CD8-positive, alpha-beta T cell (primary cell): ENCODE measurements at regions of chr17 and their contacts with region 1.

Region 1: DNA sequence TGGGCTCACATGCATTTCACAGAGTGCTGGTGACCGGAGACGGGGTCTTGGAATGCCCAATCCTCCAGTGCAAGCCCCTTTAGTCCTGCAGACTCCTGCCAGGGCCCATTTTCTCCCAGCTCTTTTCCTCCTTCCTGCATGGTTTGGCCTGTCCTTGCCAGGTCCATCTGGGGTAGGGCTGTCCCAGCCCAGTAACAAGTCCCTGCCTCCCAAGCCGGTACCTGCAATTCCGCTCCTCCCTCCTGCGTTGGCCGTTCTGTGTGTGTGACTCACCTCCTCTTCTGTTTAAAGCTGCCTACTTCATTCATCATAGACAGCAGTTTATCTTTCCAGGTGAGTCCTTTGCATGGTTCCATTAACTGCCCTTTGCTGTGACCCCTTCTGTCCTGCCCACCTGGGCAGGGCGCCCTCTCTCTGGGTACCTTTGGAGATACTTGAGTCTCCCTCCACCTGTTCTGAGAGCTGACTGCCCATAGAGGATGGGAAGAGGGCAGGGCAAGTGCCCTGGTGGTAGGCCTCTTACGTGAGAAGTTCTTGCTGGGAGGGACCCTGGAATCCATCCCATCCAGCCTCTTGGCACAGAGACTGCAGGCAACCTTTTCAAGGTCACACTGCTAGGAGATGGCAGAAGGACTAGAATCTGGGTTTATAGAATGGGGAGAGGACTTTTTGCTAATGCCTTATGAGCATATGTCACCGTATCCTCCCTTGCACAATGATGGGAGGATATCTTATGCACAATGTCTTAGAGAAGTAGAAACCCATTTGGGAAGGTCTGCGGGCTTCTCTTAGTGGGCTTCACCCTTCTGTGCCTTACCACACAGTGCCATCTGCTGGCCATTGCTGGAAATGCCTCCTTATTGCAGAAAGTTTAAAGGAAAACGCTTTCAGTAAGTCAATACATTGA is 29.7 kb upstream of the LGALS9 start:
- DNase-seq: peak; percentile 67 to 89 (median 81)
- ATAC-seq: peak; percentile 70
- H3K4me3 ChIP-seq: no peak overlapping the region
- H3K4me3 Mint-ChIP-seq: no peak overlapping the region
- H3K27ac ChIP-seq: no peak overlapping the region
- H3K27ac Mint-ChIP-seq: no peak overlapping the region
- H3K4me1 ChIP-seq: no peaks in the 10 kb centered on the region
- H3K4me1 Mint-ChIP-seq: peaks cover 7% of the 10 kb centered on the region
- H3K27me3 ChIP-seq: no peaks in the 10 kb centered on the region
- H3K27me3 Mint-ChIP-seq: no peaks in the 10 kb centered on the region
- CTCF ChIP-seq: peak; percentile 90

Region 2: GRCh38 chr17:27245230-27245696 is 356.1 kb before region 1 on chr17:
- CTCF ChIA-PET with region 1: interaction called, 222 read pairs
- POLR2A ChIA-PET with region 1: no interaction called
- intact Hi-C with region 1: no loop called
- DNase-seq: peak; percentile 6 to 64 (median 47)
- ATAC-seq: peak; percentile 73
- H3K4me3 ChIP-seq: no peak overlapping the region
- H3K4me3 Mint-ChIP-seq: no peak overlapping the region
- H3K27ac ChIP-seq: no peak overlapping the region
- H3K27ac Mint-ChIP-seq: no peak overlapping the region
- H3K4me1 ChIP-seq: no peaks in the 10 kb centered on the region
- H3K4me1 Mint-ChIP-seq: no peaks in the 10 kb centered on the region
- H3K27me3 ChIP-seq: no peaks in the 10 kb centered on the region
- H3K27me3 Mint-ChIP-seq: peaks cover 11% of the 10 kb centered on the region
- CTCF ChIP-seq: no peak

Region 3: DNA sequence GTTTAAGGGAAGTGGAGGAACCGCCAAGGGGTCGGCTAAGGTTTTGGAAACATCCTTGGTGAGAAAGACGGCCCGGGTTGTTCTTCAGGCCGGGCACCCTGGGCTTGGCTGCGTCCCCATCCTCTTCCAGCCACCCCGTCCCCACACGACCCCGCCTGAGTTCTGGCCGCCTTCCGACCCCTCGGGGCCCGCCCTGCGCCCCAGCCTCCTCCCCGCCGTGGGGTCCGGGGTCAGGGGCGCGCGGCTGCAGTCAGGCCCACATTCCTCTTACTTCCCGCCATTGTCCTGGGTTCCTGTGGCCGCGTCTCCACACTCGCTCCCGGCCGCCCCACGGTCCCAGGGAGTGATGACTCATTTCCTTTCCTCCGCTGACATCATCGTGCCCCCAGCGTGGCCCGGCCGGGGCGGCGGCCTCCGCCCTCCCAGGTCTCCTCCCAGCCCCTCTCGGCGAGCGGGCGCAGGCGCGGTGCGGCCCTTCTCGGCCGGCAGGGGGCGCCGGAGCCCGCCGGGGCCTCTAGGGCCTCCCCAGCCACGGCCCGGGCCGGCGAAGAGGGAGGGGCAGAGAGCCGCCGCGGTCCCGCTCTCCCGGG is 247.8 kb before region 1 on chr17:
- CTCF ChIA-PET with region 1: interaction called, 43 read pairs
- POLR2A ChIA-PET with region 1: no interaction called
- intact Hi-C with region 1: loop called (anchors 1 kb)
- DNase-seq: peak; percentile 67 to 94 (median 86)
- ATAC-seq: peak; percentile 95
- H3K4me3 ChIP-seq: peak overlapping the region; percentile 66 to 78
- H3K4me3 Mint-ChIP-seq: peak overlapping the region; percentile 77
- H3K27ac ChIP-seq: peak overlapping the region; percentile 68 to 84
- H3K27ac Mint-ChIP-seq: peak overlapping the region; percentile 93
- H3K4me1 ChIP-seq: peaks cover 18% of the 10 kb centered on the region
- H3K4me1 Mint-ChIP-seq: peaks cover 17% of the 10 kb centered on the region
- H3K27me3 ChIP-seq: no peaks in the 10 kb centered on the region
- H3K27me3 Mint-ChIP-seq: no peaks in the 10 kb centered on the region
- CTCF ChIP-seq: peak; percentile 91

Region 4: GRCh38 chr17:27455914-27456680 is 145.2 kb before region 1 on chr17 and contains the start of gene KSR1:
- CTCF ChIA-PET with region 1: interaction called, 9 read pairs
- POLR2A ChIA-PET with region 1: no interaction called
- intact Hi-C with region 1: loop called (anchors 1 kb)
- DNase-seq: peak; percentile 45 to 90 (median 79)
- ATAC-seq: peak; percentile 92
- H3K4me3 ChIP-seq: peak within 1 kb of the TSS; percentile 70 to 89
- H3K4me3 Mint-ChIP-seq: peak within 1 kb of the TSS; percentile 90
- H3K27ac ChIP-seq: peak within 1 kb of the TSS; percentile 54 to 56
- H3K27ac Mint-ChIP-seq: peak within 1 kb of the TSS; percentile 38
- H3K4me1 ChIP-seq: peaks cover 19% of the 10 kb centered on the region
- H3K4me1 Mint-ChIP-seq: peaks cover 27% of the 10 kb centered on the region
- H3K27me3 ChIP-seq: no peaks in the 10 kb centered on the region
- H3K27me3 Mint-ChIP-seq: no peaks in the 10 kb centered on the region
- CTCF ChIP-seq: peak; percentile 40
- total RNA-seq, gene KSR1: 23.3 to 25.6 TPM

Region 5: GRCh38 chr17:27633312-27634025 is 32.1 kb after region 1 on chr17:
- CTCF ChIA-PET with region 1: interaction called, 11 read pairs
- POLR2A ChIA-PET with region 1: no interaction called
- intact Hi-C with region 1: no loop called
- DNase-seq: no peak
- ATAC-seq: no peak
- H3K4me3 ChIP-seq: no peak overlapping the region
- H3K4me3 Mint-ChIP-seq: no peak overlapping the region
- H3K27ac ChIP-seq: no peak overlapping the region
- H3K27ac Mint-ChIP-seq: peak overlapping the region; percentile 10
- H3K4me1 ChIP-seq: peaks cover 17% of the 10 kb centered on the region
- H3K4me1 Mint-ChIP-seq: peaks cover 24% of the 10 kb centered on the region
- H3K27me3 ChIP-seq: no peaks in the 10 kb centered on the region
- H3K27me3 Mint-ChIP-seq: no peaks in the 10 kb centered on the region
- CTCF ChIP-seq: no peak

Region 6: DNA sequence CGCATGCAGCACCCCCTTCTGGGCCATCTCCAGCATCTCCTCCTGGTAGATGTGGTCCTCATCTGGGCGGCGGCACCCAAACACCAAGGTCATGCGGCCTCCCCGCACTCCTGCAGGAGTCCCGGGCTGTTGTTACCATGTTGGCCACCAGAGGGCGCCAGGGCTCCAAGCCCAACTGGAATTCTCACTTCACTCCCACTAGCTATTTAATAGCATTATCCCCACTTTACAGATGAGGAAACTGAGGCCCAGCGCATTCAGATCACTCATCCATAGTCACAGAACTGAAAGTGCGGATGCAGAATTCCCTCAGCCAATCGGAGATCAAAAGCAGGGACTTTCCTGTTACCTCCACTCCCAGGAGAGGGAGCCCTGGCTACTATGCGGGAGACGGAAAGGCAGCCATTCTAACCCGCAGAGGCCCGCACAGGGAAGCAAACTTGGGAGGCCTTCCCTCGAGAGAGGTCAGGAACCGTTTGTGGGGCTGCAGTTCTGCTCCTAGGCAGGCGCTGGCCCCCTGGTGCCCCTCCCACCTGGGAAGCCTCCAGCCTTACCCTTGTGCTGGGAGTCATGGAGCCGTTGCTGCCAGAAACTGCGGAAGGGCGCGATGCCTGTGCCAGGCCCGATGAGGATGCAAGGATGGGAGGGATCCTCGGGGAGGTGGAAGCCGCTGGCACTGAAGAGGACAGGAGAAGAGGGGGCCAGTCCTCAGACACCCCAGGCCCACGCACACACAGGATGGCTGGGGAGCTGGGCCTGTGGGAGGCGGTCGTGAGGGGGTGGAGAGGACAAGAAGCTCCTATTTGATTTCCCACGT is 159.0 kb after region 1 on chr17:
- CTCF ChIA-PET with region 1: no interaction called
- POLR2A ChIA-PET with region 1: no interaction called
- intact Hi-C with region 1: loop called in 1 of 2 experiments (anchors 5 kb)
- DNase-seq: peak; percentile 51 to 82 (median 67)
- ATAC-seq: peak; percentile 61
- H3K4me3 ChIP-seq: no peak overlapping the region
- H3K4me3 Mint-ChIP-seq: no peak overlapping the region
- H3K27ac ChIP-seq: no peak overlapping the region
- H3K27ac Mint-ChIP-seq: no peak overlapping the region
- H3K4me1 ChIP-seq: no peaks in the 10 kb centered on the region
- H3K4me1 Mint-ChIP-seq: no peaks in the 10 kb centered on the region
- H3K27me3 ChIP-seq: no peaks in the 10 kb centered on the region
- H3K27me3 Mint-ChIP-seq: no peaks in the 10 kb centered on the region
- CTCF ChIP-seq: peak; percentile 84

Region 7: DNA sequence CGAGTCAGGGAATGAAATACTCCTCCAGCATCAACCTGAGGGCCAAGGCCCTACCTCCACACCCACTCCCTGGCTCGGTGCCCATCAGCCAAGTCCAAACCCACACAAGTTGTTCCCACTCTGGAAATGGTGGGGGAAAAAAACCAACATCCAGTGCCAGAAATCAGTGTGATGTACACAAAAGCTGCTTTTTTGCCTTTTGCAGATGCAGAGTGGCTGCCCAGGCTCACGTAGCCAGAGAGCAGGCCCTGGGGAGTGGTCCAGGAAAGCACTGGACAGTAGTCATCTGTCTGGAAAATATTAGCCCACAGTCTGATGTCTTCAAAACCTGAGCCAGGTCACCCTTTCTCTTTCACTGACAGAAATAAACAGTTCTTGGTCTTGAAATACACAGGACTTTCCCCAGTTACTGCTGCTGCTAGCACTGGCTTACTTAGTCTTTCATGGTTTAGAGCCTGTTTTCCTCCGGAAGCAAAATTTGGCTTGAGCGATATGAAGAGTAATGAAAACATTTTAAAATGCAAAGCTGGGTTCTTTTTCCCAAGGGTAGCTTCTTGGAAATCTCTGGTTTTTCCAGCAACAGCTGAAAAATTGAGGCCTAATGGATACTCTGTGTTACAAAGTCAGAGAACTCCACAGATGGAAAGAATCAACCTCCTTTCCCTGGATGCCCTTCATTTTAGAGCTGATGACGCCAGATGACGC is 217.2 kb after region 1 on chr17:
- CTCF ChIA-PET with region 1: no interaction called
- POLR2A ChIA-PET with region 1: no interaction called
- intact Hi-C with region 1: no loop called
- DNase-seq: no peak
- ATAC-seq: no peak
- H3K4me3 ChIP-seq: no peak overlapping the region
- H3K4me3 Mint-ChIP-seq: no peak overlapping the region
- H3K27ac ChIP-seq: no peak overlapping the region
- H3K27ac Mint-ChIP-seq: no peak overlapping the region
- H3K4me1 ChIP-seq: no peaks in the 10 kb centered on the region
- H3K4me1 Mint-ChIP-seq: no peaks in the 10 kb centered on the region
- H3K27me3 ChIP-seq: no peaks in the 10 kb centered on the region
- H3K27me3 Mint-ChIP-seq: no peaks in the 10 kb centered on the region
- CTCF ChIP-seq: no peak

Region 8: DNA sequence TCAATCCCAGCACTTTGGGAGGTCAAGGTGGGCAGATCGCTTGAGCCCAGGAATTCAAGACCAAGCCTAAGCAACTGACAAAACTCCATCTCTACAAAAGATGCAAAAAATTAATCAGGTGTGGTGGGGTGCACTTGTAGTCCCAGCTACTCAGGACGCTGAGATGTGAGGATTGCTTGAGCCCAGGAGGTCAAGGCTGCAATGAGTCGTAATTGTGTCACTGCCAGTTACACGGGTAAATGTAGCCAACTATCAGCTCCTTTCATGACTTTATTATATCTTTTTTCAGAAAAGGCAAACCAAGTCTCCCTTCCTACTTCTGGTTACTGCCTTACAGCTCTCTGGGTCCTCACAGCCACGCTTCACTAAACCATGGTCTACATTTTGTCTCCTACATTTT is 1056.4 kb after region 1 on chr17:
- CTCF ChIA-PET with region 1: no interaction called
- POLR2A ChIA-PET with region 1: no interaction called
- intact Hi-C with region 1: no loop called
- DNase-seq: no peak
- ATAC-seq: no peak
- H3K4me3 ChIP-seq: no peak overlapping the region
- H3K4me3 Mint-ChIP-seq: no peak overlapping the region
- H3K27ac ChIP-seq: no peak overlapping the region
- H3K27ac Mint-ChIP-seq: peak overlapping the region; percentile 49
- H3K4me1 ChIP-seq: peaks cover 16% of the 10 kb centered on the region
- H3K4me1 Mint-ChIP-seq: peaks cover 38% of the 10 kb centered on the region
- H3K27me3 ChIP-seq: no peaks in the 10 kb centered on the region
- H3K27me3 Mint-ChIP-seq: no peaks in the 10 kb centered on the region
- CTCF ChIP-seq: no peak